Heart left ventricle (tissue), 16 donors: ENCODE measurements at regions of chr14 and their contacts with region 1.

Region 1: GRCh38 chr14:36553656-36554260 is 28.7 kb downstream of the NKX2-8 start:
- DNase-seq: no peak
- ATAC-seq: peak in 1 of 4 donors; percentile 36
- H3K4me3 ChIP-seq: no peak overlapping the region
- H3K27ac ChIP-seq: no peak overlapping the region
- H3K4me1 ChIP-seq: no peaks in the 10 kb centered on the region
- H3K27me3 ChIP-seq: peaks cover 0 to 24% (median 0%) of the 10 kb centered on the region in 9 donors
- CTCF ChIP-seq: peak; percentile 43 to 73 (median 63)
- POLR2A ChIP-seq: no peak

Region 2: GRCh38 chr14:35883677-35884293 is 670.0 kb before region 1 on chr14:
- intact Hi-C with region 1: loop called in 2 of 10 experiments (anchors 5 to 10 kb)
- DNase-seq: no peak
- ATAC-seq: no peak
- H3K4me3 ChIP-seq: no peak overlapping the region
- H3K27ac ChIP-seq: no peak overlapping the region
- H3K4me1 ChIP-seq: peaks cover 0 to 10% (median 5%) of the 10 kb centered on the region in 12 donors
- H3K27me3 ChIP-seq: no peaks in the 10 kb centered on the region
- CTCF ChIP-seq: peak; percentile 24 to 69 (median 48)
- POLR2A ChIP-seq: no peak

Region 3: GRCh38 chr14:36570065-36570464 is 16.3 kb after region 1 on chr14:
- intact Hi-C with region 1: no loop called
- DNase-seq: no peak
- ATAC-seq: no peak
- H3K4me3 ChIP-seq: no peak overlapping the region
- H3K27ac ChIP-seq: no peak overlapping the region
- H3K4me1 ChIP-seq: no peaks in the 10 kb centered on the region
- H3K27me3 ChIP-seq: peaks cover 0 to 43% (median 16%) of the 10 kb centered on the region in 9 donors
- CTCF ChIP-seq: no peak
- POLR2A ChIP-seq: no peak

Region 4: DNA sequence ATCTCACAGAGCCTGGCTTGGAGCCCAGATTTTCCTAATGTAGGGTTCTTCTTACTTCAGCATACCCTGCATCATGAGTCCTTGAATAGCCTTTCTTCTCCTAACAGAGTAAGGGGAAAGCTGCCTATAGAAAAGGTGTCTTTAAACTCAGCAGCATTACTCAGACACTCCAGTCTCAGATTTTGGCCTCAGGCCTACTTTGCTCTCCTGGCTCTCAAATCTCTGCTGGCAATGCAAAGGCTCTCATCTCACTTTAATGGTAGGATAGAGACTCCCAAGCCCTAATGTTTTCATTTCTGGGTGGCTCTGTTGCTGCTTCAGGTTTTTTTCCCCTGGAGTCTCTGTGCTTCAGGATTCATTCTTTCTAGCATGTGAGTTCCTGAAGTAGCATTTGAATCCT is 37.7 kb after region 1 on chr14:
- intact Hi-C with region 1: loop called in 1 of 10 experiments (anchors 5 kb)
- DNase-seq: no peak
- ATAC-seq: no peak
- H3K4me3 ChIP-seq: no peak overlapping the region
- H3K27ac ChIP-seq: no peak overlapping the region
- H3K4me1 ChIP-seq: no peaks in the 10 kb centered on the region
- H3K27me3 ChIP-seq: peaks cover 7 to 90% (median 56%) of the 10 kb centered on the region in 9 donors
- CTCF ChIP-seq: no peak
- POLR2A ChIP-seq: no peak

Region 5: DNA sequence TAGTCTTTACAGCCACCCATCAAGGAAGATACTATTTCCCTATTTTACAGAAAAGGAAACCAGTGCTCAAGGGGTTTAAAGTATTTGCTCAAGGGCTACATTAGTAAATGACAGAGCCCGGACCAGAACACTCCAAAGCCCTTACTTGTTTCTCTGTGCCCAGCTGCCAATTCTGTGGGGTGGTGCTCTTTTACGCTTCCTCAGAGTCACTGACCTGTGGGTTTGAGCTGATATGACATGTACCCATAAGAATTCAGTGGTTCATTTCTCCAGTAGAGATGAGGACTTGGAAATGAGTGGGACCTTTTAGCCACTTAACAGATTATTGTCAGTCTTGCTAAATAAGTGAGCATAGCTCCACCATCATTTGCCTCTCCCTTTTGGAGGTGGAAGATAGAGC is 66.1 kb after region 1 on chr14:
- intact Hi-C with region 1: no loop called
- DNase-seq: no peak
- ATAC-seq: no peak
- H3K4me3 ChIP-seq: no peak overlapping the region
- H3K27ac ChIP-seq: no peak overlapping the region
- H3K4me1 ChIP-seq: no peaks in the 10 kb centered on the region
- H3K27me3 ChIP-seq: peaks cover 0 to 24% (median 0%) of the 10 kb centered on the region in 9 donors
- CTCF ChIP-seq: no peak
- POLR2A ChIP-seq: no peak

Region 6: GRCh38 chr14:36941783-36942521 is 388.2 kb after region 1 on chr14:
- intact Hi-C with region 1: loop called in 7 of 10 experiments (anchors 2 to 10 kb)
- DNase-seq: peak; percentile 34 to 78 (median 46)
- ATAC-seq: peak in 3 of 4 donors; percentile 37 to 81 (median 73)
- H3K4me3 ChIP-seq: no peak overlapping the region
- H3K27ac ChIP-seq: no peak overlapping the region
- H3K4me1 ChIP-seq: no peaks in the 10 kb centered on the region
- H3K27me3 ChIP-seq: peaks cover 0 to 13% (median 0%) of the 10 kb centered on the region in 9 donors
- CTCF ChIP-seq: peak; percentile 87 to 97 (median 94)
- POLR2A ChIP-seq: no peak

Region 7: GRCh38 chr14:37157987-37158386 is 604.2 kb after region 1 on chr14:
- intact Hi-C with region 1: loop called in 3 of 10 experiments (anchors 5 to 10 kb)
- DNase-seq: no peak
- ATAC-seq: no peak
- H3K4me3 ChIP-seq: no peak overlapping the region
- H3K27ac ChIP-seq: no peak overlapping the region
- H3K4me1 ChIP-seq: no peaks in the 10 kb centered on the region
- H3K27me3 ChIP-seq: no peaks in the 10 kb centered on the region
- CTCF ChIP-seq: no peak
- POLR2A ChIP-seq: no peak